BJ (cell line): ENCODE measurements at regions of chr16 and their contacts with region 1.

Region 1: DNA sequence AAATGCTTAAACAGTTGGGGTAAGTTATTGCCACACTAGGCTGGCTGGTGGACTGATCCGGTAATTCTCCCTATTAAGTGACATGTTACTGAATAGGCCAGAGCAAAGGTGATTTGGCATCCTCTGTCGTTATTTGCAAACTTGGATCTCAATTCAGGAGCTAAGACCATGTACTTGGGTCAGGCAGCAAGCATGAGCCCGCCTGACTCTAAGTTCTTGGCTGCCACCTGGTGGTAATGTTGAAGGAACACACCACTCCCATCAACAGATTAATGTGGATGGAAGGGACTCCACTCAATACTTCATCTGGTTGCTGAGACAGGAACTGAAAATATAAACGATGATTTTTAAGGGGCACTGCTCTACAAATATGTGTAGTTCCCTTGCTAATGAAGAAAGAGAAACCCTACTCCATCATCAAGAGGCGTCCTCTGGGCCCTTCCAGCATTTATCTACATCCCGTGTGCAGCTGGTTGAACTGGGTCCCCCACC is 70.8 kb downstream of the EMP2 start:
- DNase-seq: no peak
- H3K4me3 ChIP-seq: no peak overlapping the region
- H3K27me3 ChIP-seq: no peaks in the 10 kb centered on the region
- CTCF ChIP-seq: peak; percentile 76

Region 2: GRCh38 chr16:10256784-10257641 is 252.6 kb before region 1 on chr16:
- CTCF ChIA-PET with region 1: interaction called, 34 read pairs
- POLR2A ChIA-PET with region 1: no interaction called
- DNase-seq: no peak
- H3K4me3 ChIP-seq: no peak overlapping the region
- H3K27me3 ChIP-seq: no peaks in the 10 kb centered on the region
- CTCF ChIP-seq: peak; percentile 94

Region 3: DNA sequence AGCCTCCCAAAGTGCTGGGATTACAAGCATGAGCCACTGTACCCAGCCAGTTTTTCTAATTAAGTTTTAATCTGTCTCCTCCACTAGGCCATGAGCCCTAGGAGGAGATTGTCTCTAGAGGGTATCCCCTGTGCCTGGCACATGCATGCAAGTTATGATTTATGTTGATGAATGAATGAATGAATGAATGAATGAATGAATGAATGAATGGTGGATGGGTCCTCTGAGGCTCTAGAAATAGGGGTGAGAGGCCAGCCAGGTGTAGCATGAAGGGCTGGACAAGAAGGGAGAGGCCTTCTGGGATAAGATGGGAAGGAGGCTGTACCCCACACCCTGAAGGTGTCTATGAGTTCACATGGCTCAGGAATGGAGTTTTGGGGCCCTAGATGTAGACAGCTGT is 22.0 kb after region 1 on chr16:
- CTCF ChIA-PET with region 1: no interaction called
- POLR2A ChIA-PET with region 1: no interaction called
- DNase-seq: no peak
- H3K4me3 ChIP-seq: no peak overlapping the region
- H3K27me3 ChIP-seq: no peaks in the 10 kb centered on the region
- CTCF ChIP-seq: no peak

Region 4: DNA sequence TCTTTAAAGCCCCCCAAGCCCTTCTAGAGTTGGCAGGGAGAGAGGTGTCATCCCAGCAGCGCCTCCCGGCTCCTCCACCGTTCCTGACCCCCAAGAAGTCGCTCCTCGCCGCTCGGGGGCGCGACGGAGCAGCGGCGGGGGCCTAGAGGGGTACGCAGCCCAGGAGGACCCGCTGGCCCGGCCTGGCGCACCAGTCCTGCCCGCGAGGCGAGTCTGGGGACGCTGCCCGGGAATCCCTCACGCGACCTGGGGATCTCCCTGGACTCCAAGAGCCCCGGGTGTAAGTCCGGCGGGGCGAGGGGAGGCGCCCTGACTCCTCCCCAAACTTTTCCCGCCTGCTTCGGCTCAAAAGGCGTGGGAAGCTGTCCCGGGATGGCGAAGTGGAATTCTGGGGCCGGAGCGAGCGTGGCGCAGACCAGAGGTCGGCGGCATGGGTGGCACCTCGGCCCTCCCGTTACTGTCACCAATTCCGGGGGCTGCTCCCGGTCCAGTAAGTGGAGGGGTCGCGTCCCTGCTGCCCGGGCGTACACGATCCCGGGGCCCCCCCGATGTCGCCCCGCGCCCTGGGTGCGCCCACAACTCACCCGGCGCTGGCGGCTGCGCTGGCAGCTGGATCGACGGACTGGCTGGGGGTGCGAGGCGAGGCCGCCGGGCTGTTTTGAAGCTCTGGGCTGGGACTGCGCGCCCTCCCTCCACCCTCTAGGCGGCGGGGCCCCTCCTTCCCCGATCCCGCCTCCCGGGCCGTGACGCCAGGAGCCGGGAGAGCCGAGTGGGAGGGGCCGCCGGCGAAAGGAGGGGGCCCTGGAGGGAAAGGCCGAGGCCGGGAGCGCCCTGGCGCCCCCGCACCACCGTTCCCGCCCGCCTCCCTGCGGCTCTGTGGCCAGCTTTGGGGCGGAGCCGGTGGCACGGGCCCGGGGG is 70.6 kb after region 1 on chr16 and contains the start of gene EMP2:
- CTCF ChIA-PET with region 1: interaction called, 10 read pairs
- POLR2A ChIA-PET with region 1: no interaction called
- DNase-seq: no peak
- H3K4me3 ChIP-seq: peak within 1 kb of the TSS; percentile 90
- H3K27me3 ChIP-seq: no peaks in the 10 kb centered on the region
- CTCF ChIP-seq: peak; percentile 76
- polyA plus RNA-seq, gene EMP2: 44.6 and 57.8 TPM in 2 replicates

Region 5: DNA sequence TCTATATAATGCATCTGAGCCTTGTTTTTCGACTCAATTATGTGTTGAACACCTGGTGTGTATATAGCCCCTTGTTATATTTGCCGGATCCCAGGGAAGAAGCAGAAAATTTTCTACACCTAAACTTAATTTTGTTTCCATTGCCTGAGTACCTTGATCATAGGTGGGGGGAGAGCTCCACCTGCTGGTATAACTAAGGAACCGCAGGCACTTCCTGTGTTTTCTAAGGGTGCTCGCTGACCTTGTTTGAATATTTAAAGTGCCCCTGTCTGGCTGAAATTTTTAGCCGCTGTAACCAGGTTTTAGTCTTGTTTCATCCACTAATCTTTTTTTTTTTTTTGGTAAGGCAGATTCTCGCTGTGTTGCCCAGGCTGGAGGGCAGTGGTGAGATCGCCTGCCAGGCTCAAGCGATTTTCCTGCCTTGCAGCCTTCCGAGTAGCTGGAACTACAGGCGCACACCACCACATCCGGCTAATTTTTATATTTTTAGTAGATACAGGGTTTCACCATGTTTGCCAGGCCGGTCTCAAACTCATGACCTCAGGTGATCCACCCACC is 227.6 kb after region 1 on chr16:
- CTCF ChIA-PET with region 1: interaction called, 83 read pairs
- POLR2A ChIA-PET with region 1: no interaction called
- DNase-seq: no peak
- H3K4me3 ChIP-seq: no peak overlapping the region
- H3K27me3 ChIP-seq: no peaks in the 10 kb centered on the region
- CTCF ChIP-seq: peak; percentile 85